Heart right ventricle (tissue), 16 donors: ENCODE measurements at regions of chr5 and their contacts with region 1.

Region 1: DNA sequence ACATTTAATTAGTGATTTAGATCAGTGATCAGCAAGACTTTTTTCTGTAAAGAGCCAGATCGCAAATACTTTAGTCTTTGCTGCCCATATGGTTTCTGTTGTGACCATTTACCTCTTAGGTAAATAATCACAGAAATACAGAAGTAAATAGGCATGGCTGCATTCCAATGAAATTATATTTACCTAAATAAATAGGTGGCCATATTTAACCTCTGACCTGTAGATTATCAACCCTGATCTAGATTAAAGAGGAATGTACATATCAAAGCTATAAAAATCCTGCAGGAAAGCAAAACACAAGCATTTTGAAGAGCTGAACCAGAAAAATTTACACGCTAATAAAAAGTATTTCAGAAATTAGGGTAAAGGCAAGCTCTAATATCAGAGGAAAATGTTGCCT is 709.7 kb downstream of the CDH18 start:
- DNase-seq: no peak
- ATAC-seq: no peak
- H3K4me3 ChIP-seq: no peak overlapping the region
- H3K27ac ChIP-seq: no peak overlapping the region
- H3K4me1 ChIP-seq: no peaks in the 10 kb centered on the region
- H3K27me3 ChIP-seq: no peaks in the 10 kb centered on the region
- CTCF ChIP-seq: no peak

Region 2: GRCh38 chr5:19264821-19265220 is 13.5 kb before region 1 on chr5:
- intact Hi-C with region 1: loop called in 1 of 10 experiments (anchors 1 kb)
- DNase-seq: no peak
- ATAC-seq: no peak
- H3K4me3 ChIP-seq: no peak overlapping the region
- H3K27ac ChIP-seq: no peak overlapping the region
- H3K4me1 ChIP-seq: no peaks in the 10 kb centered on the region
- H3K27me3 ChIP-seq: no peaks in the 10 kb centered on the region
- CTCF ChIP-seq: no peak

Region 3: DNA sequence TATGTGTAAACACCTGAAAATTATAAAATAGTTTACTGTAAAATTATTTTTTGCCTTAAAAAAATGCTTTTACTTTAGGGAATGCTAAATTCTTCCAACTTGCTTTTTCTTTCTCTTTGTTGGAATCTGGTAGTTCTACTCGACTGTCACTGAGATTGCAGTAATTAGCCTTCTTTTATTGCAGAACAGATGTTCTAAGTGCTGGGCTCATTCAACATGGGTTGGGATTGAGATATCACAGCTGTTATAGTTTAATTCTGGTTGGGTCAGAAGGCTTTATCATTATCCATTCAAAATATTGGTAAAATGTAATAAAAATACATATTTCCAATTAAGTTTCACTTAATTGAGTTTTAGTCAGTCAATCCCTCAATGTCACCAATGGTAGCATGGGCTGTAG is 23.0 kb after region 1 on chr5:
- intact Hi-C with region 1: no loop called
- DNase-seq: no peak
- ATAC-seq: no peak
- H3K4me3 ChIP-seq: no peak overlapping the region
- H3K27ac ChIP-seq: no peak overlapping the region
- H3K4me1 ChIP-seq: no peaks in the 10 kb centered on the region
- H3K27me3 ChIP-seq: no peaks in the 10 kb centered on the region
- CTCF ChIP-seq: no peak